Endothelial cell of umbilical vein (primary cell): ENCODE measurements at regions of chr4 and their contacts with region 1.

Region 1: DNA sequence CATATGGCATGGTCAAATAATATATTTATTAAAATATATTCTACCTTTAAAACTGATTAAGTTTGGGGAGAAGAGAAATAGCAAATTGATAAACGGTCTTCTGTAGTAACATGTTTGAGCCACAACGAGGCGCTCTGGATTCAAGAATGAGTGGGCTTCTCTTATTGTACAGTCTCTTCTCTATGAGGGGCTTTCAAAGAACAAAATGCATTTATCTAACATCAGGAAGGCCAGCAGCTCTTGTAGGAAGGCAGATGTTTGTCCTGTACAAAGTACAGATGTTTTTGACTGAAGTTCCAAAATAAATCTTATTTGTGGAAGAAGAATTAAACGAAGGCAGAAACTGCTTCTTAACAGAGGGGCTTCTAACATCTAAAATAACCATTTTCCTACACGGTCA is 153.6 kb downstream of the RASL11B start:
- DNase-seq: peak; percentile 81
- H3K4me3 ChIP-seq: no peak overlapping the region
- H3K27ac ChIP-seq: no peak overlapping the region
- H3K4me1 ChIP-seq: peaks cover 18% of the 10 kb centered on the region
- H3K27me3 ChIP-seq: no peaks in the 10 kb centered on the region
- CTCF ChIP-seq: peak; percentile 53 to 63
- POLR2A ChIP-seq: no peak

Region 2: DNA sequence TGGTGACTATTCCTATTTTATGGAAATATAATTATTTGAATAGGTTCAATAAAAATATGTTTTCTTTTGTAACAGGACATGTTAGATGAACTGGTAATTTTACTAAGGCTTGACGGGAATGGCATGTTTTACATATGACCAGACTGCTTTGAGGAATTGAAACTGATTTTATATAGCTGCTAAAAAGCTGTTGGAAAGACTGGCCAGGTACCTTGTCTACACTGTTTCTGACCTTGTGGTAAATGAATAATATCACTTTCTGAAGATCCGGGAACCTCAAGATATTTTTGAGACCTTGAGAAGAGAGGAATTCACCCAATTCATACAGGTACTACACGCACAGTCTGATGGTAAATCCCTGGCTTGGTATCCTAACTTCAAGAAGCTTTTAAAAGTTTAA is 314.5 kb before region 1 on chr4:
- CTCF ChIA-PET with region 1: no interaction called
- POLR2A ChIA-PET with region 1: no interaction called
- dilution Hi-C with region 1: no loop called
- intact Hi-C with region 1: no loop called
- DNase-seq: no peak
- H3K4me3 ChIP-seq: no peak overlapping the region
- H3K27ac ChIP-seq: no peak overlapping the region
- H3K4me1 ChIP-seq: no peaks in the 10 kb centered on the region
- H3K27me3 ChIP-seq: peaks cover 0 to 5% of the 10 kb centered on the region in 2 experiments
- CTCF ChIP-seq: no peak
- POLR2A ChIP-seq: no peak

Region 3: DNA sequence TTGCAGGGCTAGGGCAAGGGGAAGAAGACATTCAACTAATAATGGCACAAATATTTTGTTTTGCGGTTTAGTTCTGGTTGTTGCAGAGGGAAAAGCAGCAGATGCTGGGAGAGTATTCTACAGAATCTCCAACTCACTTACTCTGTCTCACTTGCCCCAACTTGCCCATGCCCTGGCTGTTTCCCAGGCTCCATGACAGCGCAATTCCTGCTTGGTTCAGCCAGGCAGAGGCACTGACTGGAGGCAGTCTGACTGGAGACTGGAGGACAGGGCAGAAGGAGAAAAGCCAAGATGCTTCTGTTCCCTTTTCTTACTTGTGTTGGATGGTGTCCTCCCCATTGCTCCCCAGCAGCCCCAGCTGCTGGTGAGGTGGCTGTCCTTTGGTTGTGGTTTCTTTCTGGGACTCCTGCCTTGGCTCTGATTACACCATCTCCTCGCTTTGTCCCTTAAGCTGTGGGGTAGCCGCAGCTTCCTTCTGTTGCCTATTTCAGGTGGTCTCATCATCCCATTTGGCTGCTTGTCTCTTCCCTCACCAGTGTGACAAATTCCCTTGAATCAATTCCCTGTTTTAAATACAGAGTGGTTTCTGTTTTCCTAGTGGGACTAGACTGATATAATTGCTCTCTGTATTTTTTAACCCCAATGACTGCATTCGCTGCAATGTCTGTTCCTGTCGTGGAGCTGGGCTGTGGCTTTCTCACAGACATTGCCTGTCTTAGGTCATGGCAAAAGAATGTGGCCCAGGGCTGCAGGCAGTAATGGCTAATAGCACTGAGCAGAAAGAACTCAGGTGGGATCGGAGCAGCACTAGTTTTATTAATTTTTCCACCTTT is 177.7 kb before region 1 on chr4:
- CTCF ChIA-PET with region 1: no interaction called
- POLR2A ChIA-PET with region 1: no interaction called
- dilution Hi-C with region 1: no loop called
- intact Hi-C with region 1: no loop called
- DNase-seq: no peak
- H3K4me3 ChIP-seq: no peak overlapping the region
- H3K27ac ChIP-seq: no peak overlapping the region
- H3K4me1 ChIP-seq: no peaks in the 10 kb centered on the region
- H3K27me3 ChIP-seq: peaks cover 2 to 18% of the 10 kb centered on the region in 2 experiments
- CTCF ChIP-seq: no peak
- POLR2A ChIP-seq: no peak

Region 4: GRCh38 chr4:52957220-52957686 is 58.4 kb before region 1 on chr4:
- CTCF ChIA-PET with region 1: no interaction called
- POLR2A ChIA-PET with region 1: no interaction called
- dilution Hi-C with region 1: no loop called
- intact Hi-C with region 1: no loop called
- DNase-seq: no peak
- H3K4me3 ChIP-seq: no peak overlapping the region
- H3K27ac ChIP-seq: no peak overlapping the region
- H3K4me1 ChIP-seq: no peaks in the 10 kb centered on the region
- H3K27me3 ChIP-seq: no peaks in the 10 kb centered on the region
- CTCF ChIP-seq: no peak
- POLR2A ChIP-seq: no peak

Region 5: GRCh38 chr4:53049528-53049927 is 33.8 kb after region 1 on chr4:
- CTCF ChIA-PET with region 1: no interaction called
- POLR2A ChIA-PET with region 1: no interaction called
- dilution Hi-C with region 1: no loop called
- intact Hi-C with region 1: no loop called
- DNase-seq: no peak
- H3K4me3 ChIP-seq: no peak overlapping the region
- H3K27ac ChIP-seq: no peak overlapping the region
- H3K4me1 ChIP-seq: no peaks in the 10 kb centered on the region
- H3K27me3 ChIP-seq: no peaks in the 10 kb centered on the region
- CTCF ChIP-seq: no peak
- POLR2A ChIP-seq: no peak

Region 6: GRCh38 chr4:53101191-53101581 is 85.5 kb after region 1 on chr4:
- CTCF ChIA-PET with region 1: interaction called, 7 read pairs
- POLR2A ChIA-PET with region 1: no interaction called
- dilution Hi-C with region 1: no loop called
- intact Hi-C with region 1: loop called (anchors 5 kb)
- DNase-seq: peak; percentile 90
- H3K4me3 ChIP-seq: peak overlapping the region in 1 of 3 experiments; percentile 39
- H3K27ac ChIP-seq: peak overlapping the region; percentile 98
- H3K4me1 ChIP-seq: peaks cover 58% of the 10 kb centered on the region
- H3K27me3 ChIP-seq: no peaks in the 10 kb centered on the region
- CTCF ChIP-seq: no peak
- POLR2A ChIP-seq: no peak

Region 7: GRCh38 chr4:53459548-53459947 is 443.9 kb after region 1 on chr4:
- CTCF ChIA-PET with region 1: no interaction called
- POLR2A ChIA-PET with region 1: no interaction called
- dilution Hi-C with region 1: no loop called
- intact Hi-C with region 1: loop called (anchors 10 kb)
- DNase-seq: peak; percentile 24
- H3K4me3 ChIP-seq: no peak overlapping the region
- H3K27ac ChIP-seq: no peak overlapping the region
- H3K4me1 ChIP-seq: peaks cover 8% of the 10 kb centered on the region
- H3K27me3 ChIP-seq: no peaks in the 10 kb centered on the region
- CTCF ChIP-seq: no peak
- POLR2A ChIP-seq: no peak

Region 8: GRCh38 chr4:53702334-53703266 is 686.9 kb after region 1 on chr4:
- CTCF ChIA-PET with region 1: interaction called, 6 read pairs
- POLR2A ChIA-PET with region 1: no interaction called
- dilution Hi-C with region 1: no loop called
- intact Hi-C with region 1: loop called (anchors 5 kb)
- DNase-seq: peak; percentile 71
- H3K4me3 ChIP-seq: peak overlapping the region in 2 of 3 experiments; percentile 2 to 13
- H3K27ac ChIP-seq: peak overlapping the region; percentile 10
- H3K4me1 ChIP-seq: peaks cover 19% of the 10 kb centered on the region
- H3K27me3 ChIP-seq: no peaks in the 10 kb centered on the region
- CTCF ChIP-seq: peak in 1 of 2 donors; percentile 8
- POLR2A ChIP-seq: no peak

Region 9: DNA sequence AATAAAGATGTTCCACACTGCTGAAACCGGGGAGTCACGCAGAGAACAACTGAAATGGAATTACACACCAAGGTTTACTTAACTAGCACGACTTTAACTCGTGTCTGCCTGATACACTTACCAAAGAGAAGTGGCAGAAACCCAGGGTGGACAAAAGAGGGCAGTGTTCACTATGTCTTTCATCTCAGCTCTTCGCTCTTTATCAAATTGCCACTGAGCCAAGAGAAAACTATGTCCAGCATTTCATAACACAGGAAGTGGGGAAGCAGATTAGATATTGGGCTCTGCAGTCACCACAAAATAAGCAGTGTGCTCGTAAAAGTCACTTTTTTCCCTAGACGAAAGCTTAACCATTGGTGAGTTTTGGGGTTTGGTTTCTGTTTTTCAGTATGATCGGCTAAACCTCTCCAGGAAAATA is 893.0 kb after region 1 on chr4:
- CTCF ChIA-PET with region 1: interaction called, 11 read pairs
- POLR2A ChIA-PET with region 1: no interaction called
- dilution Hi-C with region 1: no loop called
- intact Hi-C with region 1: loop called (anchors 1 kb)
- DNase-seq: peak; percentile 87
- H3K4me3 ChIP-seq: no peak overlapping the region
- H3K27ac ChIP-seq: no peak overlapping the region
- H3K4me1 ChIP-seq: peaks cover 3% of the 10 kb centered on the region
- H3K27me3 ChIP-seq: peaks cover 26% of the 10 kb centered on the region in 2 experiments
- CTCF ChIP-seq: peak; percentile 77 to 85
- POLR2A ChIP-seq: no peak